Breast epithelium (tissue), 4 donors: ENCODE measurements at regions of chr15 and their contacts with region 1.

Region 1: DNA sequence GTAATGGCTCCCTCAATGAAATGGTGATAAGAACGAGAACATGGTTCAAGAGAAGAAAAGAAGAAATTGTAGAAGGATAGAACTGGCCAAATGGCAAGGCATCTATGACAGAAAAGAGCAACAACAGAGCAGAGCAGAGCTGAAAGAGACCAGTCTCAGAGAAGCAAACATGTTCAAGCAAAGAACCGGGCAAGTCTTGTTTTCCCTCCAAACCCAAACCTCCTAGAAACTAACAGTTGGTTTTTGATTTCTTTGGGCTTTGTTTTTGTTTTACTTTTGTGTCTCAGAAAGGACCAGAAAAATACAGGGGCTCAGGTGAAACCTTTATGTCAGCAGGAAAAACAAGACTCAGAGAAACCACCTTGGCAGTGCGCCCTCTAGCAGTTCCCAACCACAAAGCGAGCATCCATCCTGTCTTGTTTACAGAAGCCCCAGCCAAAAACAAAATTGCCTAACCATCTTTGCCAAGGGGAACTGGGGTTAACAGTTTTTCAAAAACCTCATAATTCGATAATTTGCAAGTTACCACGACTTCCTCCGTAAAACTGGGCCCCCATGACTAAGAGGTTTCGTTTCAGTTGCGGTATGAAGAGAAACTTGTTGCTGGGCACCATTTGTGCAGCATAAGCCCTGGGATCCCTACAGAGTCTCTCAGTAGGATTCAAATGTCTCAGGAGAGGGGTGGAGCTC is 159.2 kb upstream of the SLC24A5 start:
- DNase-seq: no peak
- H3K4me3 ChIP-seq: no peak overlapping the region
- H3K27ac ChIP-seq: no peak overlapping the region
- H3K4me1 ChIP-seq: no peaks in the 10 kb centered on the region
- H3K27me3 ChIP-seq: no peaks in the 10 kb centered on the region
- CTCF ChIP-seq: no peak
- POLR2A ChIP-seq: no peak

Region 2: DNA sequence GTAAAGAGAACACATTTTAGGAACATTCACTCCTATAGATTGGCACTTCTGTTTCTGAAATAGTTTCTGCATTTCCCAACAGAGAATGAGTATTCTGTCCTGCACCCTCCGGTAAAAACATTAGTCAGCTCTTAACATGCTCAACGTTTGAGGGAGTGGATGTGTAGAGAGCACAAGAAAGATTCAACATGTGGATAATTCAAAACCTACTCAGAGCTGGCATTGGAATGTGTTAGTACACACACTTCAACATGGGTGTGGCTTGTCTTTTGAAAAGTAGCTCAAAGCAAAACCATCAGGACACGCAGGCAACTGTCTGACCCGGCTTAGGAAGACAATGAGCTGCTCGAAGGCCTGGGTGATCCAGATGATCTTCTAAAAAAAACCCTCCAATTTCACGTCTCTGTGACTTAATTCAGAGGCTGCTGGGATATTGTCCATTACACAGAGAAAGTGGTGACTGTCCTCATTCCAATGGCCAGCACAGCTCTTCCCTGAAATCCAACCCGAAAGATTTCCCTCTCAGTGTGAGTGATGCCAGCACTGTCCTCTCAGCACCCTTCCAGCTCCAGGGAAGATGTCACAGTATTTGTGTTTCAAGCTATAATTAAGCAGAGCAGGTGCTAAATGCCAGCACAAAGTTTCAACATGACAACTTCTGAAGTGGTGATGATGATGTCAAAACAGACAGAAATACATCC is 665.9 kb after region 1 on chr15:
- intact Hi-C with region 1: loop called (anchors 5 kb)
- DNase-seq: no peak
- H3K4me3 ChIP-seq: peak overlapping the region in 1 of 3 donors; percentile 28
- H3K27ac ChIP-seq: peak overlapping the region in 1 of 2 donors; percentile 63
- H3K4me1 ChIP-seq: no peaks in the 10 kb centered on the region
- H3K27me3 ChIP-seq: no peaks in the 10 kb centered on the region
- CTCF ChIP-seq: no peak
- POLR2A ChIP-seq: no peak